ENCODE measurements at regions of chr1 and their contacts with region 1.

Region 1: GRCh38 chr1:178055779-178056471 is 38.0 kb upstream of the RASAL2 start:
- DNase-seq: peak; percentile 77
- H3K4me3 Mint-ChIP-seq: no peak overlapping the region
- H3K27ac Mint-ChIP-seq: peak overlapping the region; percentile 14
- H3K4me1 Mint-ChIP-seq: peaks cover 50% of the 10 kb centered on the region
- H3K27me3 Mint-ChIP-seq: no peaks in the 10 kb centered on the region
- CTCF ChIP-seq: no peak

Region 2: DNA sequence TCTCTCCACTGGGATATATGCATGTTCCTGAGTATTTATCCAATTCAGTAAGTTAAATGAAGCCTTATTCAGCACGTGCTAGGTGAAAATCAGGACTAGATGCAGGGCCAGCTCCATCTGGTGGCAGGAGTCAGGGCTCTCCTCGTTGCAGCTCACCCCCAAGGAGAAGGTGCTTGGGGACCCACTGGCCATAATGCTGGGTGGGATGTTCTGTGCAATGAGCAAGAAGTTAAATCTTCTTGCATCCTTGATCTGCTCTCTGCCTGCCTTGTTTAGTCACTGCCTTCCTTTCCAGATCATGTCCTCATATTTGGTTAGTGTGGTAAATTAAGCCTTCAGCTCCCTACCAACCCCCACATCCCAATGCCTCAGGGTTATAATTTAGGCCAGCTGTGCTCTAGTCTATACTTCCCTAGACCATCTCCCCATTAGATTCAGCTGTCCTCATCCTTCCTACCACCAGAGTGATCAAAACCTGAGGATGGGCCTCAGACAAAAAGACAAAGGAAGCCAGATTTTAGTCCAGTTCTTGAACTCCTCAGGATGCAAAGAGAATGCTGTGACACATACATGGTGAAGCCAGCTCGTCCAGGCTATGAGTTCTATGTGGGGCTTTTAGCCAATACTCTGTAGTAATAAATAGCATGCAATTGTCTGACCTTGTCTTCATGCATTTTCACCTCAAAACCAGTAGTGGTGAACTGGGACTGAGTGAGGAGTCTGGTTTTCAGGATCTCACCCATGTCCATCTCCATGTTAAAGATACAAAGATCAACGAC is 142.0 kb before region 1 on chr1:
- CTCF ChIA-PET with region 1: no interaction called
- POLR2A ChIA-PET with region 1: no interaction called
- intact Hi-C with region 1: no loop called
- DNase-seq: peak; percentile 48
- H3K4me3 Mint-ChIP-seq: no peak overlapping the region
- H3K27ac Mint-ChIP-seq: no peak overlapping the region
- H3K4me1 Mint-ChIP-seq: no peaks in the 10 kb centered on the region
- H3K27me3 Mint-ChIP-seq: no peaks in the 10 kb centered on the region
- CTCF ChIP-seq: peak; percentile 48

Region 3: DNA sequence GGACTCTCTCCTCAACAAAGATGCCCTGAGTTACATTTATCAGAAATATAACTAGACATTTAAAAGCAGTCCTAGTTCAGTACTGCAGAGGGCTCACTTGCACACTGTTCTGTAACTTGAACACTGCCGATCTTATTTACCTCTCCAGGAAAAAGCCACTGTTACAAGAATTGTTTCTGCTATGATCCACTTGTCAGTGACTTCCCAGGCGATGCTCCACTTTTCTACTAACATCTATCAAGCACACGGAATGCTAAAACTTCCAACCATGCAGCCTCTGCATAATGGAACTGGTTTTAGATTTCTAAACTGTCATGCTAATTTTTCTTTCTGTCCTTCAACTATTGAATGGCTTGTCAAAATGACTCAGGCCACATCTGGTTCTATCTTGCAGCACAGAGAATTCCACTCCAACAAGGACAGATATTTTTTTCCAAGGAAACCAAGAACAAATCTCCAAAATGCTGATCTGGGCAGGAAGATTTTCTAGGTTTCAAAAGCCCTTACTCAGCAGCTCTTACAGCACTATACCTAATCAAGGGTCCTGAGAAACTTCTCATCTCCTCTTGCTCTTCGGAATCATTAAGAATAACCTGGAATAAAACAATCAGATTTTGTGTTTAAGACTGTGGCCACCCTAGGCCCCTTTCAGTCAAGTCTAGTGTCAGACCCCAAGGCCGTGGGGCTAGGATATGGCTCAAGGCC is 96.0 kb before region 1 on chr1:
- CTCF ChIA-PET with region 1: interaction called, 4 read pairs
- POLR2A ChIA-PET with region 1: no interaction called
- intact Hi-C with region 1: loop called (anchors 1 kb)
- DNase-seq: peak; percentile 50
- H3K4me3 Mint-ChIP-seq: no peak overlapping the region
- H3K27ac Mint-ChIP-seq: no peak overlapping the region
- H3K4me1 Mint-ChIP-seq: peaks cover 6% of the 10 kb centered on the region
- H3K27me3 Mint-ChIP-seq: no peaks in the 10 kb centered on the region
- CTCF ChIP-seq: peak; percentile 74

Region 4: DNA sequence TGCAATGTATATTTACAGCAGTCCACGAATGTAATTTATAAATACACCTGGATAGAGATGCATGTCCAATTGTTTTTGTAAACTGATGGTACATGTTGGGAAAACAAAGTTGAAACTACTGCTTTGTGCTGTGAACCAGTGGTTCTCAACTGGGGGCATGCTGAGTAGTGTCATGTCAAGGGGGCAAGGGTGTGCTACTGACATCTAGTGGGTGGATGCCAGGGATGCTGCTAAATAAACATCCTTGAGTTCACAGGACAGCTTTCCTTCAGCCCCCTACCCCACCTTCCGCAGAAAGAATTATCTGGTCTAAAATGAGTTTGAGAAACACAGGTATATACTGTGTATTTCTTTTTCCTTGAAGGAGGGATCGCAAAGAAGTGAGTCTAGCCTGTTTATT is 133.9 kb after region 1 on chr1:
- CTCF ChIA-PET with region 1: interaction called, 8 read pairs
- POLR2A ChIA-PET with region 1: interaction called, 5 read pairs
- intact Hi-C with region 1: loop called (anchors 5 kb)
- DNase-seq: peak; percentile 66
- H3K4me3 Mint-ChIP-seq: no peak overlapping the region
- H3K27ac Mint-ChIP-seq: no peak overlapping the region
- H3K4me1 Mint-ChIP-seq: peaks cover 31% of the 10 kb centered on the region
- H3K27me3 Mint-ChIP-seq: no peaks in the 10 kb centered on the region
- CTCF ChIP-seq: peak; percentile 39